Psoas muscle (tissue), 8 donors: ENCODE measurements at regions of chr10 and their contacts with region 1.

Region 1: DNA sequence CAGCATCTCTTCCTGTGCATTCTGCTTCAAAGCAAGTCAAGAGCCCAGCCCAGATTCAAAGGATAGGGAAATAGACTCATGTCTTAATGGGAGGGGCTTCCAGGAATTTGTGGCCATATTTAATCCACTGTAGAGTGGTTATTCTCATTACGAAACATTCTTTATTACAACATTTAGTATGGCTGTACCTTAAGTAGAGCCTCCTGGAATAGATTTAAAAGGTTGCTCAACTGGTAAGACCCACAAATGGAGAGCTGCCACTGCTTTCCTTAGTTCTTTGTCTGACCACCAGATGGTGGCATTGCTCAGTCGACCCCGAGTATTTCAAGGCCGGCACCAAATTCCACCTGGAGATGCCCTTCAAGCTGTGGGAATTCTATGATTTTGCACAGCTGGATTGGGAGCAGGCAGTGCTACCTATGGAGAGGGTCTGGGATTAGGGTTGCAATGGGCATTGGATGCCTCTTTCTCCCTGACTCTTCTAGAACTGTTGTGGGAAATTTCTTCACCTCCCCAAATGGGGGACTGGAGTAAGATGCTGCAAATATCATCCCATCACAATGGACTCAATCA is 102.2 kb downstream of the RBM20 start:
- DNase-seq: peak; percentile 43 to 57
- ATAC-seq: peak; percentile 74 to 85 (median 79)
- H3K4me3 ChIP-seq: no peak overlapping the region
- H3K27ac ChIP-seq: no peak overlapping the region
- H3K4me1 ChIP-seq: peaks cover 15% of the 10 kb centered on the region
- H3K27me3 ChIP-seq: no peaks in the 10 kb centered on the region
- CTCF ChIP-seq: peak; percentile 82

Region 2: DNA sequence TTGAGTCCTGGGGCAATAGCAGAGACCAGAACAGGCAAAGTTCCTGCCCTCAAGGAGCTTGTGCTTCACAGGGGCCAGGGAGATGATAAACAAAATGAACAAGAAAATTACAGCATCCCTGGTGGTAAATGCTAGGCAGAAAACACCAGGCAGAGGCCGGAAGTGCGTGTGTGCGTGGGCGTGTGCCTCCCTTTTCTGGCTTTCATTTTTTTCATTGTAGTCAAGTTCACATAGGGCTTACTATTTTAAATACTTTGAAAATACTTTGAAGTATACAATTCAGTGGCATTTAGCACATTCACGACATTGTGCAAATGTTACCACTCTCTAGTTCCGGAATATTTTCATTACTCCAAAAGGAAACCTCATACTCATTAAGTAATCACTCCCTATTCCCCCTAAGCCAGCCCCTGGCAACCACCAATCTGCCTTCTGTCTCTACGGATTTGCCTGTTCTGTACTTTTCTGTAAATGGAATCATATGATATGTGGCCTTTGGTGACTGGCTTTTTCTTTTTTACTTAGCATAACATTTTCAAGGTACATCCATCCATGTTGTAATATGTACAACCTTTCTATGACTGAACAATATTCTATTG is 37.3 kb after region 1 on chr10:
- intact Hi-C with region 1: loop called (anchors 5 kb)
- DNase-seq: no peak
- ATAC-seq: no peak
- H3K4me3 ChIP-seq: no peak overlapping the region
- H3K27ac ChIP-seq: peak overlapping the region; percentile 74
- H3K4me1 ChIP-seq: peaks cover 41% of the 10 kb centered on the region
- H3K27me3 ChIP-seq: no peaks in the 10 kb centered on the region
- CTCF ChIP-seq: no peak

Region 3: GRCh38 chr10:110893559-110894179 is 147.3 kb after region 1 on chr10:
- intact Hi-C with region 1: loop called (anchors 1 to 5 kb)
- DNase-seq: no peak
- ATAC-seq: peak; percentile 42 to 91 (median 74)
- H3K4me3 ChIP-seq: no peak overlapping the region
- H3K27ac ChIP-seq: no peak overlapping the region
- H3K4me1 ChIP-seq: no peaks in the 10 kb centered on the region
- H3K27me3 ChIP-seq: no peaks in the 10 kb centered on the region
- CTCF ChIP-seq: peak; percentile 65